ENCODE measurements at regions of chr1 and their contacts with region 1.

Region 1: GRCh38 chr1:28648474-28649198 is at the start of gene RNU11:
- DNase-seq: peak; percentile 80 to 96
- ATAC-seq: peak; percentile 72 to 91 (median 77)
- H3K4me3 ChIP-seq: peak within 1 kb of the TSS; percentile 38
- H3K4me3 Mint-ChIP-seq: peak within 1 kb of the TSS; percentile 89
- H3K27ac ChIP-seq: peak within 1 kb of the TSS; percentile 95
- H3K27ac Mint-ChIP-seq: peak within 1 kb of the TSS; percentile 96 to 100
- H3K4me1 ChIP-seq: peaks cover 34% of the 10 kb centered on the region
- H3K4me1 Mint-ChIP-seq: peaks cover 25 to 27% of the 10 kb centered on the region in 2 donors
- H3K27me3 ChIP-seq: no peaks in the 10 kb centered on the region
- H3K27me3 Mint-ChIP-seq: no peaks in the 10 kb centered on the region
- CTCF ChIP-seq: no peak
- total RNA-seq, gene RNU11: not detected

Region 2: DNA sequence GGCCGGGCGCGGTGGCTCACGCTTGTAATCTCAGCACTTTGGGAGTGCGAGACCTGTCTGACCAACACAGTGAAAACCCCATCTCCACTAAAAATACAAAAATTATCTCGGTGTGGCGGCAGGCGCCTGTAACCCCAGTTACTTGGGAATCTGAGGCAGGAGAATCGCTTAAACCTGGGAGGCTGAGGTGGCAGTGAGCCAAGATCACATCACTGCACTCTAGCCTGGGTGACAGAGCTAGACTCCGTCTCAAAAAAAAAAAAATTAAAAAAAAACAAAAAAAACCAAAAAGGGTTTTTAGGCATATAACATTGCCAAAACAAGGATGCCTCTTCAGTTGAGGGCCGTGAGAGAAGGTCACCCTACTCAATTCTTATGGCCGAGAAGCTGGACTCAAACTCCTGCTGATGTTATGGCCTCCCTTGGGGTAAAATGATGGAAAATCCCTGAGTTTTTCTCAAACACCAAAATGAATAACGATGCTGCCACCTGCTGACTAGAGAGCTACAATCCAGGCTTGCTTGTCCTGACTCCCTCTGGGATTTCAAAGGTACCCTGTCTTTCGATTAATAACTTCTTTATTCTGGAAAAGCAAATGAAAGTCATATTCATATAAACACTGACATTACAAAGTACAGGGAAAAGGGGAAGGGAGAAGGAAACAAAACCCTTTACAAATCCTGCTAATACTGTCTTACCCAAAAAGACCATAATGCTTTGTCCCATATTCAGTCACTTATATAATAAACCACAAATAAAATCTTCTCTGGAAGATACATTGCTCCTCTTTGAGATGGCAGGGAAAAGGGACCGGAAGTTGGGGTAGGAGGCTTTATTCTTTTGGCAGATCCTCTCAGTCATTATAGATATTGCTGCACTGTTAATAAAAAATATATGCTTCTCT is 45.8 kb before region 1 on chr1:
- intact Hi-C with region 1: no loop called
- DNase-seq: peak in 1 of 2 donors; percentile 63
- ATAC-seq: no peak
- H3K4me3 ChIP-seq: no peak overlapping the region
- H3K4me3 Mint-ChIP-seq: no peak overlapping the region
- H3K27ac ChIP-seq: no peak overlapping the region
- H3K27ac Mint-ChIP-seq: peak overlapping the region in 1 of 2 donors; percentile 33
- H3K4me1 ChIP-seq: no peaks in the 10 kb centered on the region
- H3K4me1 Mint-ChIP-seq: no peaks in the 10 kb centered on the region
- H3K27me3 ChIP-seq: no peaks in the 10 kb centered on the region
- H3K27me3 Mint-ChIP-seq: no peaks in the 10 kb centered on the region
- CTCF ChIP-seq: no peak

Region 3: GRCh38 chr1:28613175-28613574 is 35.5 kb before region 1 on chr1:
- intact Hi-C with region 1: no loop called
- DNase-seq: no peak
- ATAC-seq: no peak
- H3K4me3 ChIP-seq: no peak overlapping the region
- H3K4me3 Mint-ChIP-seq: no peak overlapping the region
- H3K27ac ChIP-seq: no peak overlapping the region
- H3K27ac Mint-ChIP-seq: no peak overlapping the region
- H3K4me1 ChIP-seq: no peaks in the 10 kb centered on the region
- H3K4me1 Mint-ChIP-seq: no peaks in the 10 kb centered on the region
- H3K27me3 ChIP-seq: no peaks in the 10 kb centered on the region
- H3K27me3 Mint-ChIP-seq: no peaks in the 10 kb centered on the region
- CTCF ChIP-seq: no peak

Region 4: GRCh38 chr1:28668191-28668955 is 19.7 kb after region 1 on chr1 and contains the start of gene GMEB1:
- intact Hi-C with region 1: loop called (anchors 1 kb)
- DNase-seq: peak; percentile 85 to 91
- ATAC-seq: peak; percentile 66 to 83 (median 78)
- H3K4me3 ChIP-seq: peak within 1 kb of the TSS; percentile 94
- H3K4me3 Mint-ChIP-seq: peak within 1 kb of the TSS; percentile 93
- H3K27ac ChIP-seq: peak within 1 kb of the TSS; percentile 97
- H3K27ac Mint-ChIP-seq: peak within 1 kb of the TSS; percentile 91 to 97
- H3K4me1 ChIP-seq: peaks cover 22% of the 10 kb centered on the region
- H3K4me1 Mint-ChIP-seq: peaks cover 14 to 15% of the 10 kb centered on the region in 2 donors
- H3K27me3 ChIP-seq: no peaks in the 10 kb centered on the region
- H3K27me3 Mint-ChIP-seq: no peaks in the 10 kb centered on the region
- CTCF ChIP-seq: no peak
- total RNA-seq, gene GMEB1: 26.1 to 29.1 (median 28.3) TPM